ENCODE measurements at regions of chr5 and their contacts with region 1.

Region 1: DNA sequence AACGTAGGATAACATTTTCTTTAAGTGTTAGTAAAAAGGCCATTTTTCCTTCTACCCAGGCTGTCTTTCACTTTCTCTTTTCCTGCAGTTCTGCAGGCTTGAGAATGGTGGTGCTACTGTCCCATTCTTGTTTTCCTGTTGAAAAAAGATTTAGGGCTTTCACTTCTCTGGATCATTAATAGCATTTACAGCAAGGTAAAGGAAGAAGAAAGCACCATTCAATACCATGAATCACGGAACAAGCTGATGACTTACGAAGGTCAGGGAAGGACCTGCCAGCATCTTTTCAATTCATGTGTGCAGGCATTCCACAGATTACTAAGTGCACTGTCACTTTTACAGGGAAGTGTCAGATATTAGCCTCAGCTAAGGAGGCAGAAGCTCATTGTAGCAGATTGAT is 292.8 kb downstream of the YTHDC2 start:
- DNase-seq: no peak
- H3K4me3 ChIP-seq: no peak overlapping the region
- H3K27ac ChIP-seq: no peak overlapping the region
- H3K4me1 ChIP-seq: 0 out of 7 replicates have a peak, but pooled peaks cover 0 to 2% (median 0%) of the 10 kb centered on the region in 4 experiments
- H3K27me3 ChIP-seq: no peaks in the 10 kb centered on the region
- CTCF ChIP-seq: peak in 2 of 3 experiments; percentile 57 to 67; a peak in 2 of 4 replicates
- EP300 ChIP-seq: no peak
- POLR2A ChIP-seq: no peak
- RAD21 ChIP-seq: peak; percentile 83 to 86

Region 2: GRCh38 chr5:113678924-113679575 is 127.2 kb before region 1 on chr5:
- CTCF ChIA-PET with region 1: interaction called, 26 read pairs
- POLR2A ChIA-PET with region 1: no interaction called
- DNase-seq: peak in 1 of 2 experiments; percentile 56
- H3K4me3 ChIP-seq: no peak overlapping the region
- H3K27ac ChIP-seq: no peak overlapping the region
- H3K4me1 ChIP-seq: peaks cover 2 to 6% (median 3%) of the 10 kb centered on the region in 4 experiments; a peak in 4 of 7 replicates
- H3K27me3 ChIP-seq: no peaks in the 10 kb centered on the region
- CTCF ChIP-seq: peak; percentile 46 to 79 (median 53)
- EP300 ChIP-seq: no peak
- POLR2A ChIP-seq: no peak
- RAD21 ChIP-seq: peak; percentile 96 to 97

Region 3: DNA sequence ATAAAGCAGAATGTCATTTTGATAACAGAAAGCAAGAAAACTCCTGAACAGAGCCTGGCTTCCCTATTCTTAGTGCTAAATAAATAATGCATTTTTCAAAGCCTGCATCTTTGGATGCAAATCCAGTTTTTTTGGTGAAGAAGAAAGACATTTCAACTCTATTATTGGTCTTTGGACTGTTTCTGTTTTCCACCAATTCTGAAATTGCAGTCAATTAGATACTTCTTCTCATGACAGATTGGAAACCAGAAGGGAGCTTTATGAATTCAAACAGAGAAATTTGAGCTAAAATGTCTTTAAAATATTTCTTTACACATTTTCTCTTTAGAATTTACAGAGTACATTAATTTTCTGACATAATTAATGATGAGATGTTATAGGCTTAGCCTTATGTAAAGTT is 103.0 kb before region 1 on chr5:
- CTCF ChIA-PET with region 1: no interaction called
- POLR2A ChIA-PET with region 1: no interaction called
- DNase-seq: no peak
- H3K4me3 ChIP-seq: no peak overlapping the region
- H3K27ac ChIP-seq: no peak overlapping the region
- H3K4me1 ChIP-seq: no peaks in the 10 kb centered on the region
- H3K27me3 ChIP-seq: no peaks in the 10 kb centered on the region
- CTCF ChIP-seq: no peak
- EP300 ChIP-seq: no peak
- POLR2A ChIP-seq: no peak
- RAD21 ChIP-seq: no peak

Region 4: GRCh38 chr5:113776832-113777525 is 29.3 kb before region 1 on chr5:
- CTCF ChIA-PET with region 1: interaction called, 11 read pairs
- POLR2A ChIA-PET with region 1: no interaction called
- DNase-seq: no peak
- H3K4me3 ChIP-seq: 0 out of 8 replicates have a peak overlapping the region, but pooled peaks of 1 of the 4 experiments have one; percentile 26
- H3K27ac ChIP-seq: 0 out of 2 replicates have a peak overlapping the region, but pooled peaks have one; percentile 35
- H3K4me1 ChIP-seq: peaks cover 2 to 13% (median 4%) of the 10 kb centered on the region in 4 experiments; a peak in 4 of 7 replicates
- H3K27me3 ChIP-seq: no peaks in the 10 kb centered on the region
- CTCF ChIP-seq: no peak
- EP300 ChIP-seq: no peak
- POLR2A ChIP-seq: no peak
- RAD21 ChIP-seq: no peak

Region 5: GRCh38 chr5:114018186-114018585 is 211.9 kb after region 1 on chr5:
- CTCF ChIA-PET with region 1: interaction called, 11 read pairs
- POLR2A ChIA-PET with region 1: no interaction called
- DNase-seq: no peak
- H3K4me3 ChIP-seq: no peak overlapping the region
- H3K27ac ChIP-seq: no peak overlapping the region
- H3K4me1 ChIP-seq: no peaks in the 10 kb centered on the region
- H3K27me3 ChIP-seq: no peaks in the 10 kb centered on the region
- CTCF ChIP-seq: peak in 2 of 3 experiments; percentile 49 to 56; a peak in 3 of 4 replicates
- EP300 ChIP-seq: no peak
- POLR2A ChIP-seq: no peak
- RAD21 ChIP-seq: peak; percentile 78 to 79

Measured in H1 (cell line).